Esophagus muscularis mucosa (tissue), 4 donors: ENCODE measurements at regions of chr1 and their contacts with region 1.

Region 1: GRCh38 chr1:147890177-147890790 is 12.3 kb upstream of the GJA8 start:
- DNase-seq: peak; percentile 92
- H3K4me3 ChIP-seq: no peak overlapping the region
- H3K27ac ChIP-seq: no peak overlapping the region
- H3K4me1 ChIP-seq: peaks cover 4 to 11% (median 6%) of the 10 kb centered on the region in 4 donors
- H3K27me3 ChIP-seq: no peaks in the 10 kb centered on the region
- CTCF ChIP-seq: peak; percentile 45 to 58 (median 57)
- EP300 ChIP-seq: no peak
- POLR2A ChIP-seq: no peak

Region 2: GRCh38 chr1:147273409-147274336 is 616.6 kb before region 1 on chr1:
- intact Hi-C with region 1: loop called (anchors 10 kb)
- DNase-seq: no peak
- H3K4me3 ChIP-seq: no peak overlapping the region
- H3K27ac ChIP-seq: peak overlapping the region in 3 of 4 donors; percentile 37 to 56 (median 52)
- H3K4me1 ChIP-seq: peaks cover 0 to 13% (median 10%) of the 10 kb centered on the region in 4 donors
- H3K27me3 ChIP-seq: no peaks in the 10 kb centered on the region
- CTCF ChIP-seq: peak; percentile 37 to 48 (median 48)
- EP300 ChIP-seq: no peak
- POLR2A ChIP-seq: no peak

Region 3: GRCh38 chr1:147640553-147641165 is 249.6 kb before region 1 on chr1:
- intact Hi-C with region 1: loop called (anchors 5 kb)
- DNase-seq: no peak
- H3K4me3 ChIP-seq: no peak overlapping the region
- H3K27ac ChIP-seq: no peak overlapping the region
- H3K4me1 ChIP-seq: peaks cover 7 to 16% (median 12%) of the 10 kb centered on the region in 4 donors
- H3K27me3 ChIP-seq: no peaks in the 10 kb centered on the region
- CTCF ChIP-seq: peak; percentile 65 to 82 (median 70)
- EP300 ChIP-seq: no peak
- POLR2A ChIP-seq: no peak

Region 4: GRCh38 chr1:147723691-147724323 is 166.5 kb before region 1 on chr1:
- intact Hi-C with region 1: loop called (anchors 2 kb)
- DNase-seq: no peak
- H3K4me3 ChIP-seq: no peak overlapping the region
- H3K27ac ChIP-seq: no peak overlapping the region
- H3K4me1 ChIP-seq: no peaks in the 10 kb centered on the region
- H3K27me3 ChIP-seq: peaks cover 0 to 40% (median 0%) of the 10 kb centered on the region in 4 donors
- CTCF ChIP-seq: peak; percentile 57 to 65 (median 57)
- EP300 ChIP-seq: no peak
- POLR2A ChIP-seq: no peak

Region 5: GRCh38 chr1:148385371-148386145 is 495.3 kb after region 1 on chr1:
- intact Hi-C with region 1: no loop called
- DNase-seq: no peak
- H3K4me3 ChIP-seq: no peak overlapping the region
- H3K27ac ChIP-seq: no peak overlapping the region
- H3K4me1 ChIP-seq: peaks cover 0 to 9% (median 7%) of the 10 kb centered on the region in 4 donors
- H3K27me3 ChIP-seq: peaks cover 0 to 14% (median 0%) of the 10 kb centered on the region in 4 donors
- CTCF ChIP-seq: no peak
- EP300 ChIP-seq: no peak
- POLR2A ChIP-seq: no peak